ENCODE measurements at regions of chr3 and their contacts with region 1.

Region 1: GRCh38 chr3:124688581-124689454 is 41.4 kb upstream of the UMPS start:
- DNase-seq: peak; percentile 77
- ATAC-seq: peak; percentile 94
- H3K4me3 ChIP-seq: no peak overlapping the region
- H3K27ac ChIP-seq: no peak overlapping the region
- H3K4me1 ChIP-seq: no peaks in the 10 kb centered on the region
- H3K27me3 ChIP-seq: no peaks in the 10 kb centered on the region
- CTCF ChIP-seq: peak; percentile 88

Region 2: DNA sequence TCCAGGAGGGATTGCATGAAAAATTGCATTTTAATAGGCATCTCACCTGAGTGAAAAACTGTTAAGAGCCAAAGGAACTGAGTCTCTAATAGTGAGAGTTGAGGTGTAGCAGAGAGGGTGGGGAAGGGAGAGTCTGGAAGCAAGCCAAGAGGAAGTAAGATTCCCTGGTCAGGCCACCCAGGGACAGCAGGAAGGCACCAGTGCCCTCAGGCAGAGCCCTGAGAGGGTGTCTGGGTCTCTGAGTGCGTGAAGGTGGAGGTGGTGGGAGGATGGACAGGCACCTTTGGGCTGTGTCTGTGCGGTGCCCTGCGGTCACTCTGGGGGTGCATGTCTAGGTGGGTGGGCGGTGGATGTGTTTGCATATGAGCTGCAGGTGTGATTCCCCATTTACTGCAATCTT is 396.5 kb before region 1 on chr3:
- intact Hi-C with region 1: no loop called
- DNase-seq: no peak
- ATAC-seq: no peak
- H3K4me3 ChIP-seq: no peak overlapping the region
- H3K27ac ChIP-seq: no peak overlapping the region
- H3K4me1 ChIP-seq: no peaks in the 10 kb centered on the region
- H3K27me3 ChIP-seq: no peaks in the 10 kb centered on the region
- CTCF ChIP-seq: no peak

Region 3: GRCh38 chr3:124567179-124567578 is 121.6 kb before region 1 on chr3:
- intact Hi-C with region 1: loop called (anchors 2 kb)
- DNase-seq: no peak
- ATAC-seq: no peak
- H3K4me3 ChIP-seq: no peak overlapping the region
- H3K27ac ChIP-seq: no peak overlapping the region
- H3K4me1 ChIP-seq: peaks cover 2% of the 10 kb centered on the region
- H3K27me3 ChIP-seq: no peaks in the 10 kb centered on the region
- CTCF ChIP-seq: no peak